PC-9 (cell line): ENCODE measurements at regions of chr10 and their contacts with region 1.

Region 1: DNA sequence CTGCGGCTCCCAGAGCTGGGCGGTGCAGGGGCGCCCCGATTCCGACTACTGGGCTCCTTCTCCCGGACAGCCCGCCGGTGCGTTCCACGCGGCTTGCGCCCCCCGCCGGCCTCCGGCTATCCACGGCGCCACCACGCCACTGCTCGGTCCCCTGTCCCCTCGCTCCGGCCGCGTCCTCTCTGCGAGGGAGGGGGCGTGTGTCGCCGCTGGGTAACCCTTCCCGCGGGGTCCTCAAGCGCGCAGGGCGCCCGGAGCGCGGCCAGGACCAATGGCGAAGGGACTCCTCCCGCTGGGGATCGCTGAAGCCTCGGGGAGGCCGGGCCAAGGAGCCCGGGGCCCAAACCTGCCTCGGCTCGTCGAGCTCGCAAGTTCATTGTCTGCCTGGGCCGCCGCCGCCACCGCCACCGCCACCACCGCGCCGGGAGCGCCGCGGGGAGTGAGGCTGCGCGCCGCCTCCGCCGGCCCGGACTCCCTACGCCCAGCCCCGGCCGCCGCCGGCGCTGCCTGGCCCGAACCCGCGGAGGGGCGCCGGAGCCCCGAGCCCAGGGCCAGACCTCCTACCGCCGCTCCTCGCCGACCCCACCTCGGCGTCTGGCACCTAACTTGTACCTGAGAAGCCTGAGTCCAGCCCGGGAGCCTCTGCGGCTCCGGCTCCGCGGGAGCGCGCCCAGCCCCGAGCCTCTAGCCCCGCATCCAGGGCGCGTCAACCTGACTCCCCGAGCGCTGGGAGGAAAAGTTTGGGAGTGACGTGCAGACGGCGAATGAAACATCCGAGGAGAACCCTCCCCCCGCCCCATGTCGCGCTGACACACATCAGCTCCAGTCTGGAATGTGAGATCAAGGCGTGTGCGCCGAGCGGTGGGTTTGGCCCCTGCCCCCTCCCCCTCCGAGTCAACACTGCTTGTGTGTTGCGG is at the start of gene CHST15:
- DNase-seq: peak; percentile 65 to 80
- H3K4me3 ChIP-seq: peak within 1 kb of the TSS; percentile 75
- H3K27ac ChIP-seq: peak within 1 kb of the TSS; percentile 83
- H3K4me1 ChIP-seq: peaks cover 11% of the 10 kb centered on the region
- H3K27me3 ChIP-seq: no peaks in the 10 kb centered on the region
- CTCF ChIP-seq: no peak
- total RNA-seq, gene CHST15: 23.8 and 24.6 TPM in 2 replicates

Region 2: DNA sequence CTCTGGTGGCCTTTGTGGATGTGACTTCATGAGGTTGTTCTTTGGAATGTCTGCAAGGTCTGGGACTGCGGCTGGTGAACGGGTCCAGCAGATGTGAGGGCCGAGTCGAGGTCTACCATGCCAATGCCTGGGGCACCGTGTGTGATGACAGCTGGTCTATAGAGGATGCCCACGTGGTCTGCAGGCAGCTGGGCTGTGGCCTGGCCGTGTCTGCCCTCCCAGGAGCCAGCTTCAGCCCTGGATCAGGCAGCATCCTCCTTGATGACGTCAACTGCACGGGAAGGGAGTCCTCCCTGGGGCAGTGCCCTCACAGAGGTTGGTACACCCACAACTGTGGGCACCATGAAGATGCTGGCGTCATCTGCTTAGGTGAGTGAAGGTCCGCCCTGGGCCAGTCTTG is 1294.4 kb before region 1 on chr10:
- CTCF ChIA-PET with region 1: no interaction called
- POLR2A ChIA-PET with region 1: no interaction called
- intact Hi-C with region 1: no loop called
- DNase-seq: no peak
- H3K4me3 ChIP-seq: no peak overlapping the region
- H3K27ac ChIP-seq: no peak overlapping the region
- H3K4me1 ChIP-seq: no peaks in the 10 kb centered on the region
- H3K27me3 ChIP-seq: peaks cover 10% of the 10 kb centered on the region; the same call in 1 of the 2 replicates
- CTCF ChIP-seq: no peak

Region 3: DNA sequence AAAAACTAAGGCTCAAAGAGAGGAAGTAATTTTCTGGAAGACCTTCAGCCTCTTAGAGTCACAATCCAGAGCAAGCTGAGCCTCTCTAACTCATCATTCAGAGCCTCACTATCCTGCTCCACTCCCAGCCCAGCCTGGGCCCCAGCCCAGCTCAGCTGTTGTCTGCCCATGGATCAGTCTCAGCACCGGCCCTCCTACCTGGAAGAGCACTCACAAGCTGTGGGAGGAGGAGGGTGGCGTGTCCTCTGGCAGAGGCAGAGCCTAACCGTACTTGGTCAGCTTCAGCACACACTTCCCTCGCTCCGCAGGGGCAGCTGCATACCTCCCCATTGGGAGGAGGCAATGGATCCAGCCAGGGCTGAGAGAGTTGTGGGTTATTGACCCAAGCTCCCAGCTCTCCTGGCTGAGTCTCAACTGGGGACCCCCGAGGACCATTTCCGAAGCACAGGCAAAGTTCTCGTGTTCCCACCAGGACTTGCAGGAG is 493.7 kb before region 1 on chr10:
- CTCF ChIA-PET with region 1: no interaction called
- POLR2A ChIA-PET with region 1: no interaction called
- intact Hi-C with region 1: no loop called
- DNase-seq: no peak
- H3K4me3 ChIP-seq: no peak overlapping the region
- H3K27ac ChIP-seq: no peak overlapping the region
- H3K4me1 ChIP-seq: no peaks in the 10 kb centered on the region
- H3K27me3 ChIP-seq: peaks cover 8% of the 10 kb centered on the region; the same call in 1 of the 2 replicates
- CTCF ChIP-seq: no peak

Region 4: DNA sequence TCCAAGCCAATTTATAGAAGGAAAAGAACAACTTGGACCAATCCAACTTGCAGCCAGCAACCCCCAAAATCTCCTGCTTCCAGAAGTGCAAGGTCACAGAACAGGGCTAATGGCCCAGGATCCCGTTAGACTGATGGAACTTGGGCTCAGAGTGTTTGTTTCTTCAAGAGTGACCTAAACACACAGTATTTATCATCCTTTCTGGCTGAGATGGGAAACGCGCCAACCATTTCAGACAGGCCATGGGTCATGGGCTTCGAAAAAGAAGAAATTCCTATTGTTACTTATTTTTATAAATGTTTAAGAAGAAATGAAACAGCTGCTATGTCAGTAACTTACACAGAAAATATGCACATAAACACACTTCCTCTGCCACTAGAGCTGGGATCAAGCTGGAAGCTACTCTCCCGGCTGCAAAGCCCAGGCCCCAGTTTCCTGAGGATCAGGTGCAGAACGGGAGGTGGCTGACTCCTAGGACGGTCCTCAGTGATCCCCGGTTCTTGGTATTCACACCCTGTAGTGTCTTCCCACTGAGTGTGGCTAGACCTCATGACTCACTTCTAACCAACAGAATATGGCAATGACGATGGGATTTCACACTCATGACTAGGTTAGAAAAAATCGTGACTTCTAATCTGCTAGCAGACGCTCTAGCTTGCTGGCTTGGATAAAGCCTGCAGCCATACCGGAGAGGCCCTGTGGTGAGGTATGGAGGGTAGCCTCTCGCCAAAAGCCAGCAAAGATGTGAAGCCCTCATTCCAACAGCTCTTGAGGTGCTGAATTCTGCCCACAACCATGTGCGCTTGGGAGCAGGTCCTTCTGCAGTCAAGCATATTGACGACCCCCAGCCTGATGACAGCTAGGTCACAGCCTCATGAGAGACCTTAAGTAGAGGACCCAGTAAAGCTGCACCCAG is 59.9 kb before region 1 on chr10:
- CTCF ChIA-PET with region 1: no interaction called
- POLR2A ChIA-PET with region 1: no interaction called
- intact Hi-C with region 1: no loop called
- DNase-seq: no peak
- H3K4me3 ChIP-seq: no peak overlapping the region
- H3K27ac ChIP-seq: no peak overlapping the region
- H3K4me1 ChIP-seq: no peaks in the 10 kb centered on the region
- H3K27me3 ChIP-seq: no peaks in the 10 kb centered on the region
- CTCF ChIP-seq: no peak

Region 5: DNA sequence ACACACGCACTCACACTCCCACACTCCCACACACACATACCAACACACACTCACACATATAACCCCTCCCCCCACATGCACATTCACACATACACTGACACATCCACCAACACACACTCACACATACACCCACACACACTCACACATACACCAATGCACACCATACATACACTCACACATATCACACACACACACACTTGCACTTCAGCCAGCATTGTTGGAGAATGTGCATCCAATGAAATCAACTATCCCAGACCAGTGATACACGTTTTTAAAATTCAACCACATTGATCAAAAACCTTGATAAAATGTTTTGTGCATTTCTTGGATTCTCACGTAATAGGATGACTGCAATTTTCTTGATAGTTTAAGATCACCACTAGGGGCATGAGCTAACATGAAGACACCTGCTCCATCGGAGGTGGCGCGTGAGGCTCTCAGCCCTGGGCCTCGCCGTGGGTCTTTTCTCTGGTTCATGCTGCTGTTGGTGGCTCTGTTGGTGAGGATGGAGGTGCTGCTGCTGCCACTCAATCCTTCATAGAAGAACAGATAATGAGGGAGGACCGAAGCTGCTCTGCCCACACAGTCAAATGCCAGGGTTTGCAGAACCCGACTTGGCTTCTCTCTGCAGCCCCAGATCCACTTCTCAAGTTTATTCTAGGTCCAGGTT is 32.5 kb after region 1 on chr10:
- CTCF ChIA-PET with region 1: no interaction called
- POLR2A ChIA-PET with region 1: no interaction called
- intact Hi-C with region 1: loop called (anchors 1 kb)
- DNase-seq: peak; percentile 28 to 78
- H3K4me3 ChIP-seq: no peak overlapping the region
- H3K27ac ChIP-seq: peak overlapping the region; percentile 22; the same call in 1 of the 2 replicates
- H3K4me1 ChIP-seq: peaks cover 6% of the 10 kb centered on the region
- H3K27me3 ChIP-seq: no peaks in the 10 kb centered on the region
- CTCF ChIP-seq: peak; percentile 58

Region 6: DNA sequence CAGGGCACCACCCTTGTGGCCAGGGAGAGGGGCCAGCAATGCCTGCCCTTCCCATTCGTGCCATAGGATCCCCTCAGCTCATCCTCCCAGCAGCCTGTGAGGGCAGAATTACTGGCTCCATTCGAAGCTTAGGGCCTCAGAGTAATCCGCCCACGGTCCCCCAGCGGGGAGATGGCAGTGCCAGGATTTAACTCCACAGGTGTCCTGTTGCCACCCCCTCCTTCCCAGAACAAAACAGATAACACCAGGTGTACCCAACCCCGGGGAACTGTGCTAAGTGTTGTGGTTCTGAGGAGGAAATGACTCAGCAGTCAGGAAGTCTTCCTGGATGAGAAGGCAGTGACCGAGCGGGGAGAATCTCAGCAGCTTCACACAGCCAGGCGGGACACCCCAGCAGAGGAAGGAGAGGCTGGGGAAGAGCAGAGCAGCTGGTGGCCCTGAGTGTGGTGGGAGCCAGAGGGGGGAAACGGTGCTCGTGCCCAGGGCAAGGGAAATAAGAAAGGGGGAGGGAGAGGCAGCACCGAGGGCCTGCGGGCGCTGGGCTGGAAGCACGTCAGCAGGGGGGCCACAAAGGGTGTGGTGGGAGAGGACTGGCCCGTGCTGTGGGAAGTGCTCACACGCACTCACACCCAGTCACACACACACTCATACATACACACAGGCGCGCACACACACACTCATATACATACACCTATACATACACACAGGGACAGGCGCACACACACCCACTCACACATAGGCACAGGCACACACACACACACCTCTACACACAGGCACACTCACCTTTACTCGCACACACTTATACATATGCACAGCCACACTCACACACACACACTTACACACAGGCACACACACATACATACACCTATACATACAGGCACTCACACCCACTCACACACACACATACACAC is 60.1 kb after region 1 on chr10:
- CTCF ChIA-PET with region 1: no interaction called
- POLR2A ChIA-PET with region 1: interaction called, 3 read pairs
- intact Hi-C with region 1: loop called (anchors 1 kb)
- DNase-seq: peak; percentile 84 to 99
- H3K4me3 ChIP-seq: peak overlapping the region; percentile 41; the same call in 1 of the 2 replicates
- H3K27ac ChIP-seq: peak overlapping the region; percentile 94
- H3K4me1 ChIP-seq: peaks cover 47% of the 10 kb centered on the region
- H3K27me3 ChIP-seq: no peaks in the 10 kb centered on the region
- CTCF ChIP-seq: no peak

Region 7: GRCh38 chr10:124168991-124169802 is 76.1 kb after region 1 on chr10:
- CTCF ChIA-PET with region 1: no interaction called
- POLR2A ChIA-PET with region 1: no interaction called
- intact Hi-C with region 1: no loop called
- DNase-seq: no peak
- H3K4me3 ChIP-seq: no peak overlapping the region
- H3K27ac ChIP-seq: no peak overlapping the region
- H3K4me1 ChIP-seq: no peaks in the 10 kb centered on the region
- H3K27me3 ChIP-seq: no peaks in the 10 kb centered on the region
- CTCF ChIP-seq: no peak

Region 8: DNA sequence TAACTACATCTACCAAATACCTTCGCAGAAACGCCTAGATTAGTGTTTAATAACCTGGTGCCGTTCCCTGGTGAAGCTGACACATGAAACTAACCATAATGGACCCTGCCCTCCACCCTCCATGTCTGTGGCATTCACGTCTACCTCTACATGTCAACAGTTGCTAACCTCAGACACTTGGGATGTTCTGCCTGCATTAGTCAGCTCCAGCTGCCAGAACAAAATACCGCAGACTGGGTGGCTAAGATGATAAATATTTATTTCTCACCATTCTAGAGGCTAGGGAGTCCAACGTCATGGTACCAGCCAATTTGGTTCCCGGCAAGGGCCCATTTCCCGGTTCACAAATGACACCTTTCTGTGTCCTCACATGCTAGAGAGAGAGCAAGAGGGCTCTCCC is 118.8 kb after region 1 on chr10:
- CTCF ChIA-PET with region 1: no interaction called
- POLR2A ChIA-PET with region 1: interaction called, 14 read pairs
- intact Hi-C with region 1: no loop called
- DNase-seq: no peak
- H3K4me3 ChIP-seq: no peak overlapping the region
- H3K27ac ChIP-seq: no peak overlapping the region
- H3K4me1 ChIP-seq: peaks cover 8% of the 10 kb centered on the region
- H3K27me3 ChIP-seq: no peaks in the 10 kb centered on the region
- CTCF ChIP-seq: no peak

Region 9: GRCh38 chr10:124388823-124389612 is 295.9 kb after region 1 on chr10:
- CTCF ChIA-PET with region 1: no interaction called
- POLR2A ChIA-PET with region 1: no interaction called
- intact Hi-C with region 1: loop called (anchors 5 kb)
- DNase-seq: peak; percentile 55 to 85
- H3K4me3 ChIP-seq: peak overlapping the region; percentile 46; the same call in 1 of the 2 replicates
- H3K27ac ChIP-seq: no peak overlapping the region
- H3K4me1 ChIP-seq: peaks cover 13% of the 10 kb centered on the region
- H3K27me3 ChIP-seq: no peaks in the 10 kb centered on the region
- CTCF ChIP-seq: peak; percentile 80

Region 10: DNA sequence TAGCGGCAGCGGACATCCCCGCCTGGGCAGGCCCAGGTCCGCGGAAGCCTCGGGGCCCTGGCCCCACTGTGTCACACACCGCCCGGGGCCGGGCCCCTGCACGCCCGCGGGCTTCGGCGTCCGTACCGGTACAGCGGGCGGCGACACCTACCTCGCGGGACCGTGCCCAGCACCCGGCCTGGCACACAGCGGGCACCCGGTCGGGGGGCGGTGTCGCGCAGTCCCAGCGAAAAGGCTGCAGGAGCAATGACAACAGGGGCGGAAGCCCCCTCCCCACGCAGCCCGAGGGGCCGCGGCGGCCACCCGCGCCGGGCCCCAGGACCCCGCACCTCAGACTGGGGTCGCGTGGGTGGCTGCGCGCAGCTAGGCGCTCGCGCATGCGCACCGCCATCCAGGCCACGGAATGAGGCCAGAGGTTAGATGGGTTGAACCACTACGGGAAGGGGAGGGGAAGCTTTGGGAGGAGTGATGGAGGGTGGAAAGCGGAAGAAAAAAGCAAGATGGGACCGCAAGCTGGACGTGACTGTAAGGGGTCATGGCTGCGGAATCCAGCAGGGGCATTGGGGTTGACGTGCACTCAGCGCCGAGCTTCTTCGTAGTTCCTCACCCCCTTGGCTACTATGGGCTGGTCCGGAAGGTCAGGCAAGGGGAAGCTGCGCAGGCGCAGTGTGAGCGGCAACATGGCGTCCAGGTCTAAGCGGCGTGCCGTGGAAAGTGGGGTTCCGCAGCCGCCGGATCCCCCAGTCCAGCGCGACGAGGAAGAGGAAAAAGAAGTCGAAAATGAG is 1730.0 kb after region 1 on chr10 and contains the starts of genes BCCIP and UROS:
- CTCF ChIA-PET with region 1: no interaction called
- POLR2A ChIA-PET with region 1: interaction called, 14 read pairs
- intact Hi-C with region 1: no loop called
- DNase-seq: peak; percentile 66 to 75
- H3K4me3 ChIP-seq: peak within 1 kb of the TSS; percentile 81
- H3K27ac ChIP-seq: peak within 1 kb of the TSS; percentile 88
- H3K4me1 ChIP-seq: peaks cover 14% of the 10 kb centered on the region
- H3K27me3 ChIP-seq: no peaks in the 10 kb centered on the region
- CTCF ChIP-seq: no peak
- total RNA-seq, gene BCCIP: 35.2 and 46.0 TPM in 2 replicates
- total RNA-seq, gene UROS: 35.1 and 40.1 TPM in 2 replicates